ENCODE measurements at regions of chr5 and their contacts with region 1.

Region 1: DNA sequence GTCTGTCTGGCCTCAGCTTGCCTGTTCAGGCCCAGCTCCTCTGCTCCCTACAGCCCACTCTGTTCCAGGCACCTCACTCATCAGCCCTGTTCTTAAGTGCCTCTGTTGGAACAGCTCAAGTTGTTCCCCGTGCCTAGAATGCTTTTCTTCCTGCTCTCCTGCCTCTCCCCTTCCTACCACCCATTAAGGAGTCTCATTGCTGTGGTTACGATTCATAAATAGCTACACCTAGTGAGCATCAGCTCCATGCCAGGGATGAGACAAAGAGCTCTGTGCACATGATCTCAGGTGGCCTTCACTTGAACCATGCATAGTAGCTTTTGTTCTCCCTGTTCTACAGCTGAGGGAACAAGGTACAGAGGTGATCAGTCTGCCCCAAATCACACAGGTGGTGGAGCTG is 54.3 kb downstream of the PSD2 start:
- DNase-seq: no peak
- H3K4me3 ChIP-seq: no peak overlapping the region
- H3K27ac ChIP-seq: peak overlapping the region in 23 of 59 donors; percentile 8 to 92 (median 52)
- H3K27me3 ChIP-seq: no peaks in the 10 kb centered on the region
- CTCF ChIP-seq: no peak

Region 2: GRCh38 chr5:139394123-139394653 is 455.8 kb before region 1 on chr5:
- intact Hi-C with region 1: no loop called
- DNase-seq: peak in 1 of 10 donors; percentile 56
- H3K4me3 ChIP-seq: peak overlapping the region; percentile 16 to 68 (median 54)
- H3K27ac ChIP-seq: peak overlapping the region in 17 of 59 donors; percentile 6 to 65 (median 37)
- H3K27me3 ChIP-seq: peaks cover 0 to 35% (median 18%) of the 10 kb centered on the region in 45 donors
- CTCF ChIP-seq: peak in 44 of 56 donors; percentile 11 to 58 (median 34)

Region 3: DNA sequence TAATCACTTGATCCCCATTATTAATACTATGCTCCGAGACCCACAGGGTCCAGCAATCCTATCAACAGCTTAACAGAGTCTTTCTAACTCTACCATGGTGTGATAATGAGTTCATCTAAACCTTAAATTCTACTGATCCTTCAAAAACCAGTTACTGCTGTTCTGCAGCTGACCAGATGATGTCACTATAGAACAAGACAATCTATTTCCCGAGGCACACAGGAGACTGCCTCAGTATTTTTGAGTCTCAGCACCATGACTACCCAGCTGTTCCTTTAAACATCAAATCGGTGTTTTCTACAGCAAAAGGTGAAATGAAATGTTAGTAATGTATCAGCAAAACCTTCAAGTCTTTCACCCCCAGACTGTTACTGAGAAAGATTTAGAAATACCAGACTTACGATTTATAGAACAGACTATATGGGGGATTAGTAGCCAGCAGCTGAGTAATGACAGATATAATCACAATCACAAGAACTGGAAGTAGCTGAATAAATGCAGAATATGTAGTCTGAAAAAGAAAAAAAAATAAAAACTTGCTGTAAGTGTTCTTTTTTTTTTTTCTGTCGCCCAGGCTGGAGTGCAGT is 427.5 kb before region 1 on chr5:
- intact Hi-C with region 1: loop called in 1 of 2 experiments (anchors 10 kb)
- DNase-seq: peak in 3 of 10 donors; percentile 11 to 46 (median 38)
- H3K4me3 ChIP-seq: no peak overlapping the region
- H3K27ac ChIP-seq: peak overlapping the region in 37 of 59 donors; percentile 1 to 72 (median 43)
- H3K27me3 ChIP-seq: no peaks in the 10 kb centered on the region
- CTCF ChIP-seq: peak; percentile 53 to 94 (median 81)

Region 4: GRCh38 chr5:139639578-139640301 is 210.2 kb before region 1 on chr5:
- intact Hi-C with region 1: loop called in 1 of 2 experiments (anchors 5 kb)
- DNase-seq: peak in 5 of 10 donors; percentile 53 to 72 (median 61)
- H3K4me3 ChIP-seq: no peak overlapping the region
- H3K27ac ChIP-seq: peak overlapping the region in 22 of 59 donors; percentile 17 to 98 (median 93)
- H3K27me3 ChIP-seq: no peaks in the 10 kb centered on the region
- CTCF ChIP-seq: no peak

Measured in dorsolateral prefrontal cortex (tissue), 120 donors.